Right lobe of liver (tissue), 6 donors: ENCODE measurements at regions of chr11 and their contacts with region 1.

Region 1: GRCh38 chr11:111586388-111586831 is 15.8 kb upstream of the SIK2 start:
- DNase-seq: no peak
- ATAC-seq: peak; percentile 80 to 85 (median 81)
- H3K4me3 ChIP-seq: no peak overlapping the region
- H3K27ac ChIP-seq: no peak overlapping the region
- H3K4me1 ChIP-seq: no peaks in the 10 kb centered on the region
- H3K27me3 ChIP-seq: no peaks in the 10 kb centered on the region
- CTCF ChIP-seq: peak; percentile 56 to 69 (median 56)
- POLR2A ChIP-seq: no peak

Region 2: DNA sequence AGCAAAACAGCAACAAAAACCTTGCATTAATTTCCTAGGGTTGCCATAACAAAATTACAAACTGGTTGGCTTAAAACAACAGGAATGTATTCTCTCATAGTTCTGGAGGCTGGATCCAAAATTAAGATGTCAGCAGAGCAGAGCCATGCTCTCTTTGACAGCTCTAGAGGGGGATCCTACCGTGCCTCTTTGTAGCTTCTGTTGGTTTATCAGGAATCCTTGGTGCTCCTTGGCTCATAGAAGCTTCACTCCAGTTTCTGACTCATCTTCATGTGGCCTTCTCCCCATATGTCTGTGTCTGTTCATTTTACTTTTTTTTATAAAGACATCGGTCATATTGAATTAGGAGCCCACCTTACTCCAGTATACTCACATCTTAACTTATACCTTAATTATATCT is 431.4 kb before region 1 on chr11:
- intact Hi-C with region 1: no loop called
- DNase-seq: no peak
- ATAC-seq: no peak
- H3K4me3 ChIP-seq: no peak overlapping the region
- H3K27ac ChIP-seq: no peak overlapping the region
- H3K4me1 ChIP-seq: no peaks in the 10 kb centered on the region
- H3K27me3 ChIP-seq: no peaks in the 10 kb centered on the region
- CTCF ChIP-seq: no peak
- POLR2A ChIP-seq: no peak

Region 3: GRCh38 chr11:111623527-111624030 is 37.2 kb after region 1 on chr11:
- intact Hi-C with region 1: no loop called
- DNase-seq: no peak
- ATAC-seq: peak; percentile 33 to 68 (median 48)
- H3K4me3 ChIP-seq: no peak overlapping the region
- H3K27ac ChIP-seq: no peak overlapping the region
- H3K4me1 ChIP-seq: peaks cover 0 to 44% (median 11%) of the 10 kb centered on the region in 4 donors
- H3K27me3 ChIP-seq: no peaks in the 10 kb centered on the region
- CTCF ChIP-seq: no peak
- POLR2A ChIP-seq: no peak

Region 4: GRCh38 chr11:111694851-111695250 is 108.4 kb after region 1 on chr11:
- intact Hi-C with region 1: no loop called
- DNase-seq: no peak
- ATAC-seq: peak in 3 of 4 donors; percentile 32 to 69 (median 42)
- H3K4me3 ChIP-seq: no peak overlapping the region
- H3K27ac ChIP-seq: no peak overlapping the region
- H3K4me1 ChIP-seq: no peaks in the 10 kb centered on the region
- H3K27me3 ChIP-seq: no peaks in the 10 kb centered on the region
- CTCF ChIP-seq: no peak
- POLR2A ChIP-seq: no peak

Region 5: DNA sequence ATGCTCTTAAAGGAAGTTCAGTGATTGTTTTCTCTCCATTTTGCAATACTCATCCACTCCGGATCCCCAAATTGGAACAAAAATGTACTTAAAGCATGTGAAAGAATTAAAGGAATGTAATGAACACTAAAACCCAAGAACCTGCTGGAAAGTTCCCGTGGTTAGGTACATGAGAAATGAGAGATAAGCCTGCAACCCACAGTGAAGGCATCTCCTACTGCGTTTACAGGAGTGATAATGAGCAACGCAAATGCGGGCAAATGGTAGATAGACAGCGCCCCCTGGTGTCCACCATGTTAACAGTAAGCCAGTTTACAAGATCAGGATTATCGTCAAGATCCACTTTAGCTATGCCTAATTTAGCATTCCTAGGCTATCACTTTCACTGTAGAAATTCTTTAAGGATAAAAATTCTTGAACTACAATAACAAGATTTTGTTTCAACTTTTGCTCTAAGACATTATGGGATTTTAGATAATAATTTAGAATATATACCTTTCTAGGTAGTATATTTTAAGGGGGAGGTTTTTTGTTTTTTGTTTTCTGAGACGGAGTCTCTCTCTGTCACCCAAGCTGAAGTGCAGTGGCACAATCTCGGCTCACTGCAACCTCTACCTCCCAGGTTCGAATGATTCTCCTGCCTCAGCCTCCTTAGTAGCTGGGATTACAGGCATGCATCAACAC is 255.1 kb after region 1 on chr11:
- intact Hi-C with region 1: loop called in 1 of 2 experiments (anchors 10 kb)
- DNase-seq: peak; percentile 81 to 92 (median 87)
- ATAC-seq: peak; percentile 86 to 92 (median 89)
- H3K4me3 ChIP-seq: no peak overlapping the region
- H3K27ac ChIP-seq: peak overlapping the region; percentile 59 to 89 (median 73)
- H3K4me1 ChIP-seq: peaks cover 0 to 25% (median 9%) of the 10 kb centered on the region in 4 donors
- H3K27me3 ChIP-seq: no peaks in the 10 kb centered on the region
- CTCF ChIP-seq: peak; percentile 90 to 97 (median 95)
- POLR2A ChIP-seq: no peak